A549 (cell line): ENCODE measurements at regions of chr17 and their contacts with region 1.

Region 1: DNA sequence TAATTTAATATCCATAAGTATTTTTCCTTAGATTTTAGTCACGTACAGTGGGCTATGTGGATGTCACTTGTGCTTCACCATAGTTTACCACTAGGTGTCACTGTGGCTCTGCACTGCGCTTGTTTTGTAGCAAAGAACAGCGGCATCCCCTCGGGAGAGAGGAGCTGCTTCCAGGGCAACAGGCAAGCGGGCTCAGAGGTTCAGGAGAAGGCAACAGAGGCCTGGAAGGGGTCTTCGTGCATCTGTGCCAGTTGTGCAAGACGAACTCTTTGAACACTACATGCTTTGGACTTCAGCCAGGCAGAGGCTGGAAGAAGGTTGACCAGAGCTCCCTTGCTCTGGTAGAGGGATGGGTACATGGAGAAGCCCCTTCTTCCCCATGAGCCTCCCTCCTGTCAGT is 20.6 kb downstream of the CYB561 start:
- DNase-seq: peak; percentile 83 to 86
- ATAC-seq: peak; percentile 63 to 93
- H3K4me3 ChIP-seq: no peak overlapping the region
- H3K27ac ChIP-seq: no peak overlapping the region
- H3K4me1 ChIP-seq: no peaks in the 10 kb centered on the region
- CTCF ChIP-seq: peak; percentile 99
- EP300 ChIP-seq: no peak
- POLR2A ChIP-seq: no peak
- RAD21 ChIP-seq: peak; percentile 97 to 99

Region 2: DNA sequence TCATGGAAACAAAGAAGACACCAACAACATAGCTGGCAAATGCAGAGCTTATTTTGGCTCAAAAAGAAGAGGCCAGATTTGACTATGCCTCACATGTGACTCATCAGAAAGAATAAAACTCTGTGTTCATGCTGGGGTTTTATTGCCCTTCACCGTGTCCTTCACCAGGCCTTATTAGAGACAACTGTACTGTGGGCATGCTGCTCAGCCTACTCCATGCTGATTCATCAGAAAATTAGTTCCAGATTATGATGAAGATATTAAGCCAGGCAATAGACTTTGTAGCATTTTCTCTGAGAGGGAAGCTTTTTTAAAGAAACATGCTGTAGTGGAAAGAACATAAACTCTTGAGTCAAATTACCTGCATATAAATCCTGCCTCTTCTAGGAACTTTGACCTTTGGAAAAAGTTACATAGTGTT is 69.1 kb before region 1 on chr17:
- CTCF ChIA-PET with region 1: no interaction called
- POLR2A ChIA-PET with region 1: no interaction called
- DNase-seq: no peak
- ATAC-seq: peak in 1 of 2 experiments; percentile 44; a peak in 2 of 6 replicates
- H3K4me3 ChIP-seq: no peak overlapping the region
- H3K27ac ChIP-seq: no peak overlapping the region
- H3K4me1 ChIP-seq: no peaks in the 10 kb centered on the region
- CTCF ChIP-seq: no peak
- EP300 ChIP-seq: no peak
- POLR2A ChIP-seq: no peak
- RAD21 ChIP-seq: no peak

Region 3: DNA sequence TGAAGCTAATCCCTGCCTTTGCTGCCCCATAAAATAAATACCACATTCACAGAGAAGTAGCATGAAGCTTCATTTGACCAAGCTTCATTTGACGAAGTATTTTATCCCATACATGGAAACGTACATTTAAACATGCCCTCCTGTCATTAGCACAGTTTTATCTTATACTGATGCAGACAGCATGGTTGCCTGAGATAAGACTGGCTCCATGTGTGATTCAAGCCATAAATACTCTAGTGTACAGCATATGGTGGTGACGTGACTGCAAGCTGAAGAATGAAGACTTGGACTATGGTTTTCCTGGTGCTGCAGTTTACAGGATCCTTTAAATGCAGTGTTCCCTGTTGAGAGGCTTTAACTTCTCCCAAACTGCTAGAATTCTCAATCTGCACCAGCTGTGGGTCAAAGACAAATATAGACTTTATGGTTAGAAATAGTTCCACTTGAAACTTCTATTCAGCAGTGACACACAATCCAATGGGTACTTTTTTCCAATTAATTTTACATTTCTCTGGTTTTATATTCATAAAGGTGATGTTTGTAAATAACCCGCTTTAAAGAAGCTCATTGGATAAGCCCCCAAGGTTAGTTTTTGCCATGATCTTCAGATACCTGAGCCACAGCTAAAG is 44.3 kb before region 1 on chr17:
- CTCF ChIA-PET with region 1: interaction called, 10 read pairs
- POLR2A ChIA-PET with region 1: no interaction called
- DNase-seq: no peak
- ATAC-seq: no peak
- H3K4me3 ChIP-seq: no peak overlapping the region
- H3K27ac ChIP-seq: no peak overlapping the region
- H3K4me1 ChIP-seq: no peaks in the 10 kb centered on the region; the same call in 2 of the 3 replicates
- CTCF ChIP-seq: no peak
- EP300 ChIP-seq: no peak
- POLR2A ChIP-seq: no peak
- RAD21 ChIP-seq: no peak

Region 4: DNA sequence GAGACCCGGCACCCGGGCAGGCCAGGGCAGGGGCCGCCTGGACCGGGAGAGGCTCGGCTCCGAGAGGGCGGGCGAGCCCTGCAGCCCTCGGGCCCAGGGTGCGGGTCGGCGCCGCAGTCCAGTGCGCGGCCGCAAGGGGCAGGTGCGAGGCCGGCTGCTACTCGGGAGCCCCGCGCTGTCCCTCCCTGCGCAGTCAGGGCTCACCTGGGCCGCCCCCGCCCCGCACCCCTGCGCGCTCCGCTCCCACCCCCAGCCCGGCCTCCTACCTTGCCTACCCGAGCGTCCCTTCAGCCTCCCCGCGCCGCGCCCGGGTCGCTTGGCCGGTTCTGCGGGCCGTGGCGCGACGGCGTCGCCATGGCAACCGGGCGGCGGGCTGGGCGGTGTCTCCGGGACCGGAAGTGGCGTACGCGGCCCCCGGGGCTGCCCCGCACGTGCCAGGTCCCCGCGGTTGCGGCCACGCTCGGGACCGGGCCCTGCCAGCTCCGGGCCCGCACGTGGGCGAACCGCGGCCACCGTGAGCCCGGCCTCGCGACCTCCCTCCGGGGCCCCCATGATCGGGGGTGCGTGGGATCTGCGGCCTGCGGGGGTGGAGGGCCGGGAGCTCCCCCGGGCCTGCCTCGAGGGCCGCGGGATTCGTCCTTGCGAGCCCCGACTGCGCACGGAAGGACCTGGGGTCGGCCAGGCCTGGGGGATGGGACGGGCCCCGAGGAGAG is 20.7 kb after region 1 on chr17 and contains the start of gene CYB561:
- CTCF ChIA-PET with region 1: interaction called, 364 read pairs
- POLR2A ChIA-PET with region 1: no interaction called
- DNase-seq: peak; percentile 81 to 92
- ATAC-seq: peak; percentile 88 to 94
- H3K4me3 ChIP-seq: peak within 1 kb of the TSS; percentile 69
- H3K27ac ChIP-seq: peak within 1 kb of the TSS; percentile 94 to 98
- H3K4me1 ChIP-seq: peaks cover 15% of the 10 kb centered on the region
- CTCF ChIP-seq: peak; percentile 61
- EP300 ChIP-seq: no peak
- POLR2A ChIP-seq: peak; percentile 47
- RAD21 ChIP-seq: peak in 1 of 2 experiments; percentile 44; a peak in 3 of 5 replicates
- polyA plus RNA-seq, gene CYB561: 16.6 and 19.7 TPM in 2 replicates

Region 5: GRCh38 chr17:63497708-63498483 is 72.4 kb after region 1 on chr17:
- CTCF ChIA-PET with region 1: interaction called, 14 read pairs
- POLR2A ChIA-PET with region 1: no interaction called
- DNase-seq: peak in 1 of 2 experiments; percentile 45
- ATAC-seq: peak; percentile 56 to 84; a peak in 5 of 6 replicates
- H3K4me3 ChIP-seq: no peak overlapping the region
- H3K27ac ChIP-seq: no peak overlapping the region
- H3K4me1 ChIP-seq: no peaks in the 10 kb centered on the region
- CTCF ChIP-seq: peak; percentile 16; the same call in 2 of the 3 replicates
- EP300 ChIP-seq: no peak
- POLR2A ChIP-seq: no peak
- RAD21 ChIP-seq: no peak

Region 6: GRCh38 chr17:63600569-63601438 is 175.3 kb after region 1 on chr17 and contains the start of gene TACO1:
- CTCF ChIA-PET with region 1: interaction called, 336 read pairs
- POLR2A ChIA-PET with region 1: no interaction called
- DNase-seq: peak; percentile 90 to 91
- ATAC-seq: peak; percentile 94 to 95
- H3K4me3 ChIP-seq: peak within 1 kb of the TSS; percentile 88
- H3K27ac ChIP-seq: peak within 1 kb of the TSS; percentile 90 to 95
- H3K4me1 ChIP-seq: peaks cover 13% of the 10 kb centered on the region
- CTCF ChIP-seq: no peak
- EP300 ChIP-seq: no peak
- POLR2A ChIP-seq: peak; percentile 75
- RAD21 ChIP-seq: 0 out of 5 replicates have a peak, but pooled peaks of 1 of the 2 experiments have one; percentile 17
- polyA plus RNA-seq, gene TACO1: 38.0 and 49.9 TPM in 2 replicates

Region 7: GRCh38 chr17:63697341-63698286 is 272.1 kb after region 1 on chr17:
- CTCF ChIA-PET with region 1: interaction called, 10 read pairs
- POLR2A ChIA-PET with region 1: no interaction called
- DNase-seq: peak; percentile 69 to 78
- ATAC-seq: peak; percentile 31 to 69
- H3K4me3 ChIP-seq: no peak overlapping the region
- H3K27ac ChIP-seq: no peak overlapping the region
- H3K4me1 ChIP-seq: 0 out of 3 replicates have a peak, but pooled peaks cover 6% of the 10 kb centered on the region
- CTCF ChIP-seq: peak; percentile 56
- EP300 ChIP-seq: no peak
- POLR2A ChIP-seq: no peak
- RAD21 ChIP-seq: peak; percentile 31 to 40; a peak in 4 of 5 replicates